Heart right ventricle (tissue), 16 donors: ENCODE measurements at regions of chr14 and their contacts with region 1.

Region 1: DNA sequence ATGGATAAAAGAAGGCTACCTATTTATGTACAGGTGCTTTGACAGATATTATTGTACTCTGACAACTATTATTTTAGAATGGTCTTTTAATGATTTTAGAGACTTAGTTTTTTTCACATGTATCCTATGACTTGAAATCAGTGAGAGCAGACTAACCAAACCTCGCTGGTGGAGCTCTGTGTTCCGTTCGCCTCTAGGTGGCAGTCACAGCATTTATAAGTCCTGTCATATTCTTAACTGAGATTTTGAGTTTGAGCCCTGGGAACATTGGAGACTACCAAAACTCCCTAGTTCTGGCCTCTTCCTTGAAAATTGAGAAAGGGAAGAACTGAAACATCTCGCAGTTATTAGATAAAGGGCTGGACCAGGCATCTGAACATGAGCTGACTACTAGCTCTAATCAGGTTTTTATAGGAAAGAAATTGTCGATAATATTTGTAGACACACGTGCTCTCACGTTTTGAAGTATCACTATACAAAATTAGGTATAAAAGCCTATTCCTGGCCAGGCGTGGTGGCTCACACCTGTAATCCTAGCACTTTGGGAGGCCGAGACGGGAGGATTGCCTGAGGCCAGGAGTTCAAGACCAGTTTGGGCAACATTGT is 48.3 kb downstream of the TTLL5 start:
- DNase-seq: peak; percentile 46 to 84
- ATAC-seq: peak in 7 of 8 donors; percentile 69 to 84 (median 74)
- H3K4me3 ChIP-seq: no peak overlapping the region
- H3K27ac ChIP-seq: no peak overlapping the region
- H3K4me1 ChIP-seq: peaks cover 2 to 27% (median 17%) of the 10 kb centered on the region in 9 donors
- H3K27me3 ChIP-seq: no peaks in the 10 kb centered on the region
- CTCF ChIP-seq: peak; percentile 52 to 92 (median 79)

Region 2: DNA sequence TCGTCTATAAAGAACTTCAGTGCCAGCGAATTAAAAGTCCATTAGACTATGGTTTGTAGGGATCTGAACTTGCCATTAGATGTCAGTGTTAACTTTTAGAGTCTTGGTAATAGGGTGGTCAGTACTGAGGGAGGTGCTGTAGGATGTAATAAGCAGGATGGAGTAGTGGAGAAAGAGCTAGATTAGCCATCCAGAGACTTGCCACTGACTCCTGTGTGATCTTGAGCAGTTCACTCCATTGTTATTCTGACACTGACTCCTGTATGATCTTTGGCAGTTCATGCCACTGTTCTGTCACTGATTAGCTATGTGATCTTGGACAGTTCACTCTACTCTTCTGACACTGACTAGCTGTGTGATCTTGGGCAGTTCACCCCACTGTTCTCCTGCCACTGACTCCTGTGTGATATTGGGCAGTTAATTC is 85.3 kb after region 1 on chr14:
- intact Hi-C with region 1: loop called in 7 of 10 experiments (anchors 2 to 10 kb)
- DNase-seq: no peak
- ATAC-seq: peak; percentile 93 to 99 (median 97)
- H3K4me3 ChIP-seq: no peak overlapping the region
- H3K27ac ChIP-seq: peak overlapping the region in 3 of 10 donors; percentile 19 to 46 (median 37)
- H3K4me1 ChIP-seq: peaks cover 0 to 12% (median 0%) of the 10 kb centered on the region in 9 donors
- H3K27me3 ChIP-seq: no peaks in the 10 kb centered on the region
- CTCF ChIP-seq: peak; percentile 22 to 76 (median 52)

Region 3: GRCh38 chr14:75861161-75861621 is 151.9 kb after region 1 on chr14:
- intact Hi-C with region 1: loop called in 1 of 10 experiments (anchors 10 kb)
- DNase-seq: no peak
- ATAC-seq: peak in 7 of 8 donors; percentile 55 to 99 (median 85)
- H3K4me3 ChIP-seq: no peak overlapping the region
- H3K27ac ChIP-seq: peak overlapping the region in 4 of 10 donors; percentile 18 to 48 (median 32)
- H3K4me1 ChIP-seq: peaks cover 0 to 19% (median 10%) of the 10 kb centered on the region in 9 donors
- H3K27me3 ChIP-seq: no peaks in the 10 kb centered on the region
- CTCF ChIP-seq: no peak

Region 4: GRCh38 chr14:75906676-75907280 is 197.5 kb after region 1 on chr14:
- intact Hi-C with region 1: loop called in 8 of 10 experiments (anchors 1 to 10 kb)
- DNase-seq: peak; percentile 25 to 79
- ATAC-seq: peak in 7 of 8 donors; percentile 59 to 82 (median 73)
- H3K4me3 ChIP-seq: no peak overlapping the region
- H3K27ac ChIP-seq: no peak overlapping the region
- H3K4me1 ChIP-seq: peaks cover 0 to 27% (median 13%) of the 10 kb centered on the region in 9 donors
- H3K27me3 ChIP-seq: no peaks in the 10 kb centered on the region
- CTCF ChIP-seq: peak; percentile 81 to 97 (median 91)

Region 5: DNA sequence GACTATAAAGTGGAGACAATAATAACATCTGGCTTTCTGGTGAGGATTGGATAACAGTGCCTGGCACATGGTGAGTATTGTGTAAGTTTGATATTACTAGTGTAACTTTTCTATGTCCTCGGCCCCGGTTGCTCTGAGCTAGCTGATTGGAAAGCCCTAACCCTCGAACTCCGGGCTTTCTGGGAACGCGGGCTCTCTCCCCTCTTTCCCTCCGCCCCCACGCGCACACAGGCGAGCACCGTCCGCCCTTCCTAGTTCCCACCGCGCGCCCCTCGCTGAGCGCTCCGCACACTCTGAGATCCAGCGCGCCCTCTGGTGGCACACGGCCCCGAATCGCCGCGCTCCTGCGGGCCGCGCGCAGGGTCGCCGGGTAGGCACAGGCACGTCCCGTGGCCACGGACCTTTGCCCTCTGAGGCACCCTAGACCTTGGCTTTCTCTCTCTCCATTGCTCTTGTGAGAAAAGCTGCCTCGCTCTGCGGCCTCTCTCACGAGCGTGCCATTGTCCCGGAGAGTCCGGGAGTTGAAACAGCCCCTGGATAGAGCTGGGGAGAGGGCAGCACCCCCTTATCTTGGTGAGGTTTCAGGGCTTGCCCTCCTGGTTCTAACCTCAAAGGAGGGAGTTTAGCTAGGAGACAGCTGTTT is 643.5 kb after region 1 on chr14:
- intact Hi-C with region 1: loop called in 2 of 10 experiments (anchors 10 kb)
- DNase-seq: peak; percentile 56 to 68
- ATAC-seq: peak; percentile 70 to 84 (median 76)
- H3K4me3 ChIP-seq: peak overlapping the region in 8 of 10 donors; percentile 9 to 40 (median 28)
- H3K27ac ChIP-seq: no peak overlapping the region
- H3K4me1 ChIP-seq: peaks cover 0 to 30% (median 14%) of the 10 kb centered on the region in 9 donors
- H3K27me3 ChIP-seq: peaks cover 0 to 14% (median 4%) of the 10 kb centered on the region in 7 donors
- CTCF ChIP-seq: peak; percentile 79 to 95 (median 90)

Region 6: DNA sequence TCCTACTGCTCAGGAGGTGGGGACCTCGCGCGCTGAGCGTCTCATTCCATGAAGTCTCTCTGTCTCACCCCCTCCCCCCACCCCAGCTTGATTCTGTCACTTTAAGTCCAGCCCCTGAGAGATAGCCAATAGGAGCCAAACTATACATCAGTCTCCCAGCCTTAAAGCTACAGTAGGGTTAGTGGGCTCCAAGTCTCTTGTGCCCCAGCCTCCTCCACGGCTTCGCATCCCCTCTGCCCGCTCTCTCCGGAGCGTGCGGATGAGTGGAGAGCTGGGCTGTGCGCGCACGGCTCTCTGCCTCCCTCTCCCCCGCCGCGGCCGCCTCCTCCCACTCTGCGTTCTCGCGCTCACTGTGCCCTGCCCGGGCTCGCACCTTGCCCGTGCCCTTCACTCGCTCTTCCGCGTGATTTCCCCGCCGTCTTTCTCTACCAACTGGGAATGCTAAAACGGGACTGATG is 666.7 kb after region 1 on chr14 and contains the start of gene ESRRB:
- intact Hi-C with region 1: loop called in 3 of 10 experiments (anchors 10 kb)
- DNase-seq: no peak
- ATAC-seq: peak in 5 of 8 donors; percentile 34 to 68 (median 42)
- H3K4me3 ChIP-seq: peak within 1 kb of the TSS in 9 of 10 donors; percentile 14 to 48 (median 42)
- H3K27ac ChIP-seq: no peak within 1 kb of the TSS
- H3K4me1 ChIP-seq: peaks cover 3 to 23% (median 13%) of the 10 kb centered on the region in 9 donors
- H3K27me3 ChIP-seq: peaks cover 4 to 77% (median 55%) of the 10 kb centered on the region in 7 donors
- CTCF ChIP-seq: no peak
- total RNA-seq, gene ESRRB: 2.5 to 13.4 (median 7.4) TPM

Region 7: DNA sequence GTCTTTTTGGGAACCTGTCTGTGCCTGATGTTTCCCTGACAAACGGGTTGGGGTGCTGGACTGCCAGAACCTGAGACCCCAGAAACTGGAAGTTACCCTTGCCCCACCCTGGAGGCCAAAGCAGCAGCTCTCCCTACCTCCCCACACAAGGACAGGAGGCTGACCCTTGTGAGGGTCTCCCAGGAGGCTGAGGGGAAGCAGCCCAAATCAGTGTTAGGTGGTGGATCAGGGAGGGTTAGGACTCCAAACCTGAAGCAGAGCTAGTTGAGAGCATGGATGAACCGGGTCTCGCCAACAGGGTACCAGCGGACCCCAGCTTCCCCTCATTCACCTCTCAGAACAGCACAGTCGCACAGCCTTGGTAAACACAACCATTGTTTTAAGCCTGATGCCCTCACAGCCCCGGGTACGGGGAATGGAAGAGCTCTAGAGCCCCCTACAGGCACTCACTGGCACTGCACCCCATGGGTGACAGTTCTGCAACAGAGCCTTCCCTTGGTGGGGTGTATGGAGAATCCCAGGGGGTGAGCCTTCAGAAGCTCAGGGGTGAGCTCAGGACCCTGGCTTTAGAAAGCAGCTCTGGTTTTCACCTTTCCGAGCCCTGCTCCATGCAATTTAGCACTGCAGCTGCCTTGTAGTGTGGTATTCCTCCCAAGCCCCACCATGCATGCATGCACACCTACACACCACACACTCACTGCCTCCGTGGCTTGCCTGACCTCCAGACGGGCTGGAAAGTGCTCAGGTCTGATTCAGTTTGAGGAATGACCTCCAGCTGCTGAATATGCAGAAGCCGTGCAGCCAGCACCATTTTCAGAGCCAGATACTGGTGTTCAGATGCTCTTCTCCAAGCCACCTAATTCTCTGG is 677.8 kb after region 1 on chr14:
- intact Hi-C with region 1: loop called in 2 of 10 experiments (anchors 10 kb)
- DNase-seq: peak; percentile 63 to 64
- ATAC-seq: peak; percentile 51 to 90 (median 86)
- H3K4me3 ChIP-seq: no peak overlapping the region
- H3K27ac ChIP-seq: no peak overlapping the region
- H3K4me1 ChIP-seq: peaks cover 0 to 7% (median 0%) of the 10 kb centered on the region in 9 donors
- H3K27me3 ChIP-seq: peaks cover 0 to 47% (median 19%) of the 10 kb centered on the region in 7 donors
- CTCF ChIP-seq: peak; percentile 89 to 98 (median 96)